Heart right ventricle (tissue), 16 donors: ENCODE measurements at regions of chr5 and their contacts with region 1.

Region 1: GRCh38 chr5:32964261-32964660 is 253.1 kb downstream of the NPR3 start:
- DNase-seq: no peak
- ATAC-seq: no peak
- H3K4me3 ChIP-seq: no peak overlapping the region
- H3K27ac ChIP-seq: no peak overlapping the region
- H3K4me1 ChIP-seq: no peaks in the 10 kb centered on the region
- H3K27me3 ChIP-seq: no peaks in the 10 kb centered on the region
- CTCF ChIP-seq: no peak

Region 2: DNA sequence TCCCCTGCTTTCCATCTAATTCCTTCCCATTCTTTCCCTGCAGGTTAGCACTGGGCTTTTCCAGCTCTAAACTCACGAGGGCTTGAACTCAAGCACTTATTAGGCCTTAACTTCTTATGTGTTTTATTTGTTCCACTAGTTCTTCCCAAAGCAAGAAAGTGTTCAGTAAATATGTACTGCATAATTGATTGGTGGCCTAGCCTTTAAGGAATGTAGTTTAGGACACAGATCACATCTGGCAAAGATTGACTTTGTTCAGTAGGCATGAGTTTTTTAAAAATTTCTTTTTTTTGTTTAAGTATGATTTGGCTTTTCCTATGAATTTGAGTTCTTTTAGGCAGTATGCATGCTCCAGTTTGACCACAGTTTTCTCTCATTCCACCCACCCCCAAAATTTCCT is 32.1 kb after region 1 on chr5:
- intact Hi-C with region 1: loop called in 1 of 10 experiments (anchors 2 kb)
- DNase-seq: no peak
- ATAC-seq: no peak
- H3K4me3 ChIP-seq: no peak overlapping the region
- H3K27ac ChIP-seq: no peak overlapping the region
- H3K4me1 ChIP-seq: no peaks in the 10 kb centered on the region
- H3K27me3 ChIP-seq: no peaks in the 10 kb centered on the region
- CTCF ChIP-seq: no peak

Region 3: DNA sequence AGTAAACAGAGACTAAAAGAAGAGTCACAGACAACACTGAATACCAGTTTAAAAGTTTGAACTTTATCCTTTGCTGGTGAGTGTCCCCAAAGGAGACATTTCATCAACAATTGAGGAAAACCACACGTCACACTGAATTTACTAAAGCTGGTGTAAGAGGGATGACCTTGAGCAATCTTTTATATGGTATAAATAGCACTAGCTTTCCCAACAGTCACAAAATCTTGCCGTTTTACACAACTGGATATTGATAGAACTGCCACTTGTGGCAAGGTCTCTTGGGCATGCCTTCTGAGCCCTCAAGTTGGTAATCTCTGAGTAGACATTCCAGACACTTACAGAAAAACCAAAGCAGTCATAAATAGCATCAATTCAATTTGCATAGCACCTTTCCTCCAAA is 165.0 kb after region 1 on chr5:
- intact Hi-C with region 1: no loop called
- DNase-seq: no peak
- ATAC-seq: peak in 1 of 8 donors; percentile 20
- H3K4me3 ChIP-seq: no peak overlapping the region
- H3K27ac ChIP-seq: no peak overlapping the region
- H3K4me1 ChIP-seq: no peaks in the 10 kb centered on the region
- H3K27me3 ChIP-seq: no peaks in the 10 kb centered on the region
- CTCF ChIP-seq: no peak